ENCODE measurements at regions of chr9 and their contacts with region 1.

Region 1: GRCh38 chr9:77291714-77292113 is 114.4 kb downstream of the VPS13A start:
- DNase-seq: no peak
- H3K4me3 ChIP-seq: no peak overlapping the region
- H3K27ac ChIP-seq: no peak overlapping the region
- H3K4me1 ChIP-seq: peaks cover 0 to 10% (median 5%) of the 10 kb centered on the region in 4 donors
- H3K27me3 ChIP-seq: no peaks in the 10 kb centered on the region
- CTCF ChIP-seq: peak in 3 of 5 experiments; percentile 15 to 27 (median 21)
- EP300 ChIP-seq: no peak
- POLR2A ChIP-seq: no peak

Region 2: DNA sequence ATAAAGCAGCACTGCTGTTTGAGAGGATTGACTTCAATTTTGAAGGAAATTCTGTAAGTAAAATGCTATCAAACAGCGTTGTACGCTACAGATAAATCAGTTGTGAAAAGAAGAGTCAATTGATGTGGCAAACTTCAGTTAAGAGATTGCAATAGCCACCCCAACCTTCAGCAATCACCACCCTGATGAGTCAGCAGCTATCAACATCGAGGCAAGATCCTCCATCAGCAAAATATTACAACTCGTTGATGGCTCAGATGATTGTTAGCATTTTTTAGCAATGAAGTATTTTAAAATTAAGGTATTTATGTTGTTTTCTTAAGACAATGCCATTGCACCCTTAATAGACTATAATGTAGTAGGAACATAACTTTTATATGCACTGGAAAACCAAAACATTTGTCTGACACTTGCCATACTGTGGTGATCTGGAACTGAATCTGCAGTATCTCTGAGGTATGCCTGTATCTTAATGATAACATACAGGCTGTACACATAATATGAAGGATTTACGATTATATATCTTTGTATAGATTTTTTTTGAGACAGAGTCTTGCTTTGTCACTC is 66.9 kb before region 1 on chr9:
- in situ Hi-C with region 1: no loop called
- intact Hi-C with region 1: no loop called
- DNase-seq: no peak
- H3K4me3 ChIP-seq: no peak overlapping the region
- H3K27ac ChIP-seq: no peak overlapping the region
- H3K4me1 ChIP-seq: no peaks in the 10 kb centered on the region
- H3K27me3 ChIP-seq: no peaks in the 10 kb centered on the region
- CTCF ChIP-seq: no peak
- EP300 ChIP-seq: no peak
- POLR2A ChIP-seq: no peak

Region 3: GRCh38 chr9:77384406-77384805 is 92.7 kb after region 1 on chr9:
- in situ Hi-C with region 1: loop called in 1 of 4 experiments (anchors 25 kb)
- intact Hi-C with region 1: no loop called
- DNase-seq: no peak
- H3K4me3 ChIP-seq: no peak overlapping the region
- H3K27ac ChIP-seq: no peak overlapping the region
- H3K4me1 ChIP-seq: no peaks in the 10 kb centered on the region
- H3K27me3 ChIP-seq: no peaks in the 10 kb centered on the region
- CTCF ChIP-seq: no peak
- EP300 ChIP-seq: no peak
- POLR2A ChIP-seq: no peak